ENCODE measurements at regions of chr6 and their contacts with region 1.

Region 1: DNA sequence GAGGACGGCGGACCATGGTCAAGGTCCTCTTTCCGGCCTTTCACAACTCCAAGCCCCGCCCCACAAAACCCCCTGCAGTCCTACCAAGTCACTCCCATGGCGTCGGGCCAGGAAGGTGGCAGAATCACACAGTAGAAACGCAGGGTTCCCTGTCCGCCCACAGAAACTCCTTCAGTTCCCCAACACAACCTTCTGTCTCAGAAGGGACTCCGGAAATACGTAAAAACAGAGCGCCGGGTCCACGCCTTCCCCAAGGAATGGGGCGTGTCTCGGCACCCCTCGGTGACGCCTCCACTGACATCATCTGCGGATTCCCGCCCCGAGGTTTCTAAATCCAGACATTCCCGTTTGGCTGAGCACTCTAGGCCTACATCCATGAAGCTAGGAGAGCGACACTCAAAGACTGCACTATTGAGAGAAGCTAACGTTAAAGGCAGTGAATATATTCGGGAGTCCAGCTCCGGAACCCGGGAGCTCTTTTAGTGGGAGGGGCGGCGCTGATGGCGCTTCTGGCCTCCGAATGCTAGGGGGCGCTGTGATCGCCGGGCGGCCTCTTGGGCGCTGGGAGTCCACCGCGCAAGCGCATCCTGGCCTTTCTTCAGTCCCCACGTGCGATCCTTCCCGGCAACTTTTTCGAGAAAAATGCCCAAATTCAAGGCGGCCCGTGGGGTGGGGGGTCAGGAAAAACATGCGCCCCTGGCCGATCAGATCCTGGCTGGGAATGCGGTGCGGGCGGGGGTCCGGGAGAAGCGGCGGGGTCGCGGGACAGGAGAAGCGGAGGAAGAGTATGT is at the starts of genes BYSL and MED20:
- DNase-seq: peak; percentile 95
- H3K4me3 ChIP-seq: peak within 1 kb of the TSS; percentile 67 to 83
- H3K27ac ChIP-seq: peak within 1 kb of the TSS; percentile 97 to 98
- H3K4me1 ChIP-seq: peaks cover 8% of the 10 kb centered on the region
- H3K27me3 ChIP-seq: no peaks in the 10 kb centered on the region
- CTCF ChIP-seq: peak; percentile 90 to 99 (median 98)
- POLR2A ChIP-seq: peak; percentile 66
- total RNA-seq, gene BYSL: 9.5 to 12.6 TPM
- total RNA-seq, gene MED20: 20.2 to 25.5 TPM

Region 2: GRCh38 chr6:41288030-41288753 is 632.9 kb before region 1 on chr6:
- intact Hi-C with region 1: no loop called
- DNase-seq: no peak
- H3K4me3 ChIP-seq: no peak overlapping the region
- H3K27ac ChIP-seq: no peak overlapping the region
- H3K4me1 ChIP-seq: no peaks in the 10 kb centered on the region
- H3K27me3 ChIP-seq: no peaks in the 10 kb centered on the region
- CTCF ChIP-seq: no peak
- POLR2A ChIP-seq: no peak

Region 3: DNA sequence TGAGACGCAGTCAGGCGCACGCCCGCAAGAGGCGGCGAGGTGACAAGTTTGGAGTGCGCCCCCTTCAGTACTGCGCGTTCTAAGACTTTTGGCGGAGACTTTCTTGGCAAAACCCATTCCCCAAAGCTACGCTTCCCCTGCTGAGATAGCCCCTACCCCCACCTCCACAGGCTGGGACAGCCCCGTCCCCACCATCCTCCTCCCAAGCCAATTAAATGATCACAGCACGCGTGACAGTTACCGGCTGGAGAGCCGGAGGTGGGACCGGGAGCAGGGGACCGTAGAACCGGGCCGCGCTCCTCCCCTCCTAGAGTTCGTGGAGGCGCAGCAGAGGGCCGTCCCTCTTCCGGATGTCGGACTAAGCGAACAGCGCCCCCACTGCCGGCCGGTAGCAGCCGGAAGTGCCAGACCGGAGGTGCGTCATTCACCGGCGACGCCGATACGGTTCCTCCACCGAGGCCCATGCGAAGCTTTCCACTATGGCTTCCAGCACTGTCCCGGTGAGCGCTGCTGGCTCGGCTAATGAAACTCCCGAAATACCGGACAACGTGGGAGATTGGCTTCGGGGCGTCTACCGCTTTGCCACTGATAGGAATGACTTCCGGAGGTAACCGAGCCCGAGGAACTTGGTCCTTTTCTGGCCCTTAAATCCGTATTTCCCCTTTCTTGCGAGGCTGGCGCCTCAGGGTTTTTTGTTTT is 133.7 kb before region 1 on chr6 and contains the start of gene TOMM6:
- intact Hi-C with region 1: loop called (anchors 5 kb)
- DNase-seq: peak; percentile 95
- H3K4me3 ChIP-seq: peak within 1 kb of the TSS; percentile 57 to 90
- H3K27ac ChIP-seq: peak within 1 kb of the TSS; percentile 92 to 93
- H3K4me1 ChIP-seq: peaks cover 20% of the 10 kb centered on the region
- H3K27me3 ChIP-seq: no peaks in the 10 kb centered on the region
- CTCF ChIP-seq: peak; percentile 90 to 99 (median 94)
- POLR2A ChIP-seq: peak; percentile 82
- total RNA-seq, gene TOMM6: 158 to 233 TPM

Region 4: DNA sequence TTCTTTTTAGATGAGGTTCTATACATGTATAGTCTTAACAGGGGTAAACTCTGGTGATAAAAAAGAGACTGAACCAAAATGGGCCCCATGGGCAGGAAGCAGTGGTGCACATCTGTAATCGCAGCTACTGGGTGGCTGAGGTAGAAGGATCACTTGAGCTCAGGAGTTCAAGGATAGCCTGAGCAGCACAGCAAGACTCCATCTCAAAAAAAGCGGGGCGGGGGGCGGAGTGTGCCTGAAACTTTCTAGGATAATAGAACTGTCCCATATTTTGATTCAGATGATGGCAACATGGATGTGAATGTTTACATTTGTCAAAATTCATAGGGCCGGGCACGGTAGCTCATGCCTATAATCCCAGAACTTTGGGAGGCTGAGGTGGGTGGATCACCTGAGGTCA is 80.4 kb after region 1 on chr6:
- intact Hi-C with region 1: no loop called
- DNase-seq: no peak
- H3K4me3 ChIP-seq: no peak overlapping the region
- H3K27ac ChIP-seq: no peak overlapping the region
- H3K4me1 ChIP-seq: no peaks in the 10 kb centered on the region
- H3K27me3 ChIP-seq: no peaks in the 10 kb centered on the region
- CTCF ChIP-seq: no peak
- POLR2A ChIP-seq: no peak

Region 5: GRCh38 chr6:42224222-42224989 is 303.3 kb after region 1 on chr6:
- intact Hi-C with region 1: loop called (anchors 10 kb)
- DNase-seq: no peak
- H3K4me3 ChIP-seq: no peak overlapping the region
- H3K27ac ChIP-seq: no peak overlapping the region
- H3K4me1 ChIP-seq: no peaks in the 10 kb centered on the region
- H3K27me3 ChIP-seq: no peaks in the 10 kb centered on the region
- CTCF ChIP-seq: no peak
- POLR2A ChIP-seq: no peak

Measured in prostate gland (tissue), 2 donors.